ENCODE measurements at regions of chr11 and their contacts with region 1.

Region 1: DNA sequence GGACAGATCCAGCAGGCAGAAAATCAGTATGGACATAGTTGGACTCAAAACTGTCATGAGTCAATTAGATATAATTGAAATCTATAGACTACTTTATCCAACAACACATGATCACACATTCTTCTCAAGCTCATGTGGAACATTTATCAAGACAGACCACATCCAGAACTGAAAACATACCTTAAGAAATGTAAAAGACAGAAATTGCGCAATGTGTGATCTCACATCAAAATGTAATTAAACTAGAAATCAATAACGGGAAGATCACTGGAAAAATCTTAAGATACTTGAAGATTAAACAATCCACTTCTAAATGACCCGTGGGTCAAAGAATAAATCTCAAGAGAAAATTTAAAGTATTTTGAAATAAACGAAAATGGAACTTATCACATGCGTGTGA is 435.3 kb downstream of the OPCML start:
- DNase-seq: no peak
- ATAC-seq: no peak
- H3K4me3 ChIP-seq: no peak overlapping the region
- H3K4me3 Mint-ChIP-seq: no peak overlapping the region
- H3K27ac ChIP-seq: no peak overlapping the region
- H3K27ac Mint-ChIP-seq: no peak overlapping the region
- H3K4me1 ChIP-seq: no peaks in the 10 kb centered on the region
- H3K4me1 Mint-ChIP-seq: no peaks in the 10 kb centered on the region
- H3K27me3 ChIP-seq: no peaks in the 10 kb centered on the region
- H3K27me3 Mint-ChIP-seq: no peaks in the 10 kb centered on the region
- CTCF ChIP-seq: no peak

Region 2: GRCh38 chr11:133156986-133157745 is 60.2 kb after region 1 on chr11:
- CTCF ChIA-PET with region 1: no interaction called
- POLR2A ChIA-PET with region 1: no interaction called
- intact Hi-C with region 1: loop called in 1 of 2 experiments (anchors 10 kb)
- DNase-seq: no peak
- ATAC-seq: no peak
- H3K4me3 ChIP-seq: no peak overlapping the region
- H3K4me3 Mint-ChIP-seq: no peak overlapping the region
- H3K27ac ChIP-seq: no peak overlapping the region
- H3K27ac Mint-ChIP-seq: no peak overlapping the region
- H3K4me1 ChIP-seq: no peaks in the 10 kb centered on the region
- H3K4me1 Mint-ChIP-seq: no peaks in the 10 kb centered on the region
- H3K27me3 ChIP-seq: no peaks in the 10 kb centered on the region
- H3K27me3 Mint-ChIP-seq: peaks cover 2% of the 10 kb centered on the region
- CTCF ChIP-seq: no peak

Region 3: GRCh38 chr11:133600786-133601185 is 503.8 kb after region 1 on chr11:
- CTCF ChIA-PET with region 1: no interaction called
- POLR2A ChIA-PET with region 1: no interaction called
- intact Hi-C with region 1: no loop called
- DNase-seq: no peak
- ATAC-seq: no peak
- H3K4me3 ChIP-seq: no peak overlapping the region
- H3K4me3 Mint-ChIP-seq: no peak overlapping the region
- H3K27ac ChIP-seq: no peak overlapping the region
- H3K27ac Mint-ChIP-seq: no peak overlapping the region
- H3K4me1 ChIP-seq: no peaks in the 10 kb centered on the region
- H3K4me1 Mint-ChIP-seq: no peaks in the 10 kb centered on the region
- H3K27me3 ChIP-seq: no peaks in the 10 kb centered on the region
- H3K27me3 Mint-ChIP-seq: no peaks in the 10 kb centered on the region
- CTCF ChIP-seq: no peak